ENCODE measurements at regions of chr17 and their contacts with region 1.

Region 1: DNA sequence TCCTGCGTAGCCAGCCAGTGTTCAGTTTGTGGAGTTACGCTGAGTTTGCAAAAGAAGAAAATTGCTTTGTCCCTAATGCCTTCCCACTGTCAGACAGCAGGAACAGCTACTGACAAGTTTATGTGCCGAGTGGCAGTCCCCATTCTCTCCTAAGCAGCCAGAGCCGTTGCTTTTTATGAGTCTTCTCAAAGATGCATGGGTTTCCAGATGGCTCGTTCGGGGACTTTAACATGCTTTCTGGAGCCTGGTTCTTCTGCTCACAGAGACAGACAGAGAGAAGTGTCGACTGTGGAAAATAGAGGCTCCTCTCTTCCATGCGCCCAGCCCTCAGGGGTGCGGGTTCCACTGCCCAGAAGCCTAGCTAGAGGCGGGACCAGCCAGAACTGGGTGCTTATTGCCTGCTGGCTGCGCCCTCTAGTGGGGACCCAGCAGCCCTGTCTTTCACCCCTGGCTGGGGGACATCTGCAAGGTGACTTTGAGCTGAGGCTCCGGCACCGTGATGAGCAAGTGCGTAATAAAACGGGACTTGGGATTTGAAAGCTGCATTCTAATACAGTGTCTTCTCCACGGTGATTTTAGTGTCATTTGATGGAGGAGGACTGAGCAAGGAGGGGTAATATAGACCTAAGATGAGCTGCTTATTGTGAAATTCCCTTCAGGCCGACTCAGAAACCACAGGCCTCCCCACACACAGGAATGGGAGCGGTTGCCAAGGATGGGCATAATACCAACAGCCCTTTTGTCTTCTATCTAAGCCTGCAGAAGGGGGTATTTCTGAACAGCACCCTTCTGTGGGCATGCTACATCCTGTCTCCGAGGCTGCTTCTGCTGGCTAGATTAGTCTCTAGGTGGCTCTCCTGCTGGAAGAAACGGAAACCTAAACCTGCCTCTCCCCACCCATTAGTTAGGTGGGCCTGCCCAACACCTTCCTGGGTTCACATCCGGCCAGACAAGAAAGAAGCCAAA is 73.1 kb downstream of the CCDC182 start:
- DNase-seq: peak; percentile 94
- H3K4me3 ChIP-seq: peak overlapping the region in 1 of 2 experiments; percentile 9; a peak in 1 of 4 replicates
- H3K27ac ChIP-seq: peak overlapping the region; percentile 5 to 100; a peak in 3 of 4 replicates
- H3K4me1 ChIP-seq: peaks cover 11 to 74% of the 10 kb centered on the region in 2 experiments; a peak in 3 of 4 replicates
- H3K27me3 ChIP-seq: no peaks in the 10 kb centered on the region
- CTCF ChIP-seq: peak; percentile 100
- EP300 ChIP-seq: peak; percentile 32 to 73; a peak in 3 of 4 replicates
- RAD21 ChIP-seq: peak; percentile 95

Region 2: GRCh38 chr17:57328093-57328882 is 343.7 kb before region 1 on chr17:
- CTCF ChIA-PET with region 1: no interaction called
- POLR2A ChIA-PET with region 1: no interaction called
- DNase-seq: no peak
- H3K4me3 ChIP-seq: no peak overlapping the region
- H3K27ac ChIP-seq: no peak overlapping the region; a peak in 1 of 4 replicates
- H3K4me1 ChIP-seq: peaks cover 9 to 14% of the 10 kb centered on the region in 2 experiments; a peak in 3 of 4 replicates
- H3K27me3 ChIP-seq: no peaks in the 10 kb centered on the region
- CTCF ChIP-seq: no peak
- EP300 ChIP-seq: no peak
- RAD21 ChIP-seq: no peak

Region 3: DNA sequence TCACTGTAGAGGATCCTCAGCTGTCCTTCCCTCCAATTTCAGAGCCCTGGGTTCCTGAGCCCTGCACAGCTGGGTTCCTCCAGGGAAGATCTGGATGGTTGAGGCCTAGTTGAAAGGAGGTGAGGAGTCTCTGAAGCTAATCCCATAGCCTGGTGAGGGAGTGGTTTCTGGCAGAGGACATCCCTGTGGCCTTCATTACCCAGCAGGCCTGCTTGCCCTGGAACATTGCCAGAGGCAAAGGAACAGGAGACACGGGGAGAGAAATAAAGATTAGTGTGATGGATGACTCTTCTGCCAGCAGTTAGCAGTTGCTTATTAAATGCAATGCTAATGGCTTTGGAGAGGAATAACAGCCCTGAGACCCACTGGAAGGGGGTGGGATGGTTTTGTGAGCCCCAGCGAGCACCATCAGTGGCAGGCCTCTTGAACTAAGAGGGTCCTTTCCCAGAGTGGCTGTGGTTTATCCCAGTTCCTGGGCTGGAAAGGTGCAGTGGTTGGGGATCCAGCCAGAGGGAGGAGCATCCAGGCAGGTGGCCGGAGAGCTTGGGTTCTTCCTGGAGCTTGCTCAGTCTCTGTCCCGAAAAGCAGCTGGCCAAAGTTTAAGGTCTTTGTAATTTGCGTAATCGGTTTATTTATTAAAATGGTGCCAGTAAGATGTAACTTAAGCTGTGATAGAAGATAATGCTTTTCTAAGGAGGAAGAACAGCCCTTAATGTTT is 136.5 kb before region 1 on chr17:
- CTCF ChIA-PET with region 1: interaction called, 11 read pairs
- POLR2A ChIA-PET with region 1: interaction called, 3 read pairs
- DNase-seq: peak; percentile 71
- H3K4me3 ChIP-seq: no peak overlapping the region
- H3K27ac ChIP-seq: peak overlapping the region in 1 of 2 experiments; percentile 100; a peak in 2 of 4 replicates
- H3K4me1 ChIP-seq: peaks cover 34 to 96% of the 10 kb centered on the region in 2 experiments
- H3K27me3 ChIP-seq: no peaks in the 10 kb centered on the region
- CTCF ChIP-seq: no peak
- EP300 ChIP-seq: peak in 1 of 2 experiments; percentile 88; a peak in 2 of 4 replicates
- RAD21 ChIP-seq: 0 out of 2 replicates have a peak, but pooled peaks have one; percentile 23

Region 4: DNA sequence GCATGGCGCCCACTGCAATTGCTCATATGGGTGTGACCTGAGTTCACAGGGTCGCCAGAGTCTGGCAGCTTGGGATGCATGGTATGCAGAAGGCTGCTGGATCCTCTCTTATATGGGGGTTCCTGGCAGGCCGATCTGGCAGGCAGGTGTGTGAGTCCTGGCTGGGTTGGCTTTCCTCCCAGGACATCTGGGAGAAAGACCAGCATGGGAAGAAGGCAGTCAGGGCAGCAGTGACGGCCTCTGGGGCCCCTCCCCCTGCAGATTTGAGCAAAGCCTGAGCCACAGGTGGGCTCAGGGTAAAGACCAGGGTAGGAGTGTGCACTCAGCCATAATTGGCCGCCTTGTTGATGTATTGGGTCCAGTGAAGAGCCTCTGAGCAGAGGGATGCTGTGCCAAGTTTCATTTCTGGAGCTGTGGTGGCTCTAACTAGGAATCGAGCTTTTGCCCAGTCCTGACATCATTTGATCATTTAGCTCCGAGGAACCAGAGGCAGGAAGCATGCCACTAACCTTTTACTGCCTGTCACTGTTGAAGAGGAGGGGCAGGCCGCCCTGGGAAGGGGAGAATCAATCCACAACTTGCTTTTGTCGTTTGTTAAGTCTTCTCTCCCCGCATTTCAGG is 101.1 kb before region 1 on chr17:
- CTCF ChIA-PET with region 1: interaction called, 10 read pairs
- POLR2A ChIA-PET with region 1: no interaction called
- DNase-seq: no peak
- H3K4me3 ChIP-seq: no peak overlapping the region
- H3K27ac ChIP-seq: peak overlapping the region in 1 of 2 experiments; percentile 100; a peak in 2 of 4 replicates
- H3K4me1 ChIP-seq: peaks cover 0 to 87% of the 10 kb centered on the region in 2 experiments; a peak in 2 of 4 replicates
- H3K27me3 ChIP-seq: no peaks in the 10 kb centered on the region
- CTCF ChIP-seq: no peak
- EP300 ChIP-seq: peak in 1 of 2 experiments; percentile 41; a peak in 1 of 4 replicates
- RAD21 ChIP-seq: peak; percentile 5; the same call in 1 of the 2 replicates

Region 5: DNA sequence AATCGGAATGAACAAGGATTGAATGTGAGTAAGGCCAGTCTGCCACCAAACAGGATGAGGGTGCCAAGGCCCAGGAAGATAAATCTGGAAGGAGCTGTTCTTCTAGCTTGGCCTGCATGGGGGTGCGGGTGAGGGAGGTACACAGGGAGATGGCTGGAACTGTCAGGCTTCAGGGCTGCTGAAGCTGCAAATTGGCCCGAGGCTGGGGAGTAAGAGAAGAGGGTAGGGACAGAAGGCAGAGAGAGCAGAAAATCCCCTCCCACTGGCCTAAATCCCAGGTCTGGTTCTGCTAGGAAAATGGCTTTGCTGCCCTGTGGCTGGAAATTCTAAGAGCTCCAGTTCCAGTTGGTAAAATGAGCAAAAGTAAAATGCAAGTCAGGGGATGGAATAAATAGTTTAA is 14.7 kb before region 1 on chr17:
- CTCF ChIA-PET with region 1: interaction called, 39 read pairs
- POLR2A ChIA-PET with region 1: interaction called, 5 read pairs
- DNase-seq: no peak
- H3K4me3 ChIP-seq: no peak overlapping the region
- H3K27ac ChIP-seq: peak overlapping the region in 1 of 2 experiments; percentile 44; a peak in 1 of 4 replicates
- H3K4me1 ChIP-seq: peaks cover 9 to 44% of the 10 kb centered on the region in 2 experiments; a peak in 3 of 4 replicates
- H3K27me3 ChIP-seq: no peaks in the 10 kb centered on the region
- CTCF ChIP-seq: no peak
- EP300 ChIP-seq: no peak
- RAD21 ChIP-seq: no peak

Region 6: GRCh38 chr17:57707851-57708291 is 35.9 kb after region 1 on chr17:
- CTCF ChIA-PET with region 1: interaction called, 17 read pairs
- POLR2A ChIA-PET with region 1: no interaction called
- DNase-seq: peak; percentile 70
- H3K4me3 ChIP-seq: no peak overlapping the region
- H3K27ac ChIP-seq: peak overlapping the region in 1 of 2 experiments; percentile 80; a peak in 2 of 4 replicates
- H3K4me1 ChIP-seq: peaks cover 0 to 29% of the 10 kb centered on the region in 2 experiments; a peak in 2 of 4 replicates
- H3K27me3 ChIP-seq: peaks cover 8% of the 10 kb centered on the region; the same call in 1 of the 2 replicates
- CTCF ChIP-seq: no peak
- EP300 ChIP-seq: no peak
- RAD21 ChIP-seq: no peak

Region 7: DNA sequence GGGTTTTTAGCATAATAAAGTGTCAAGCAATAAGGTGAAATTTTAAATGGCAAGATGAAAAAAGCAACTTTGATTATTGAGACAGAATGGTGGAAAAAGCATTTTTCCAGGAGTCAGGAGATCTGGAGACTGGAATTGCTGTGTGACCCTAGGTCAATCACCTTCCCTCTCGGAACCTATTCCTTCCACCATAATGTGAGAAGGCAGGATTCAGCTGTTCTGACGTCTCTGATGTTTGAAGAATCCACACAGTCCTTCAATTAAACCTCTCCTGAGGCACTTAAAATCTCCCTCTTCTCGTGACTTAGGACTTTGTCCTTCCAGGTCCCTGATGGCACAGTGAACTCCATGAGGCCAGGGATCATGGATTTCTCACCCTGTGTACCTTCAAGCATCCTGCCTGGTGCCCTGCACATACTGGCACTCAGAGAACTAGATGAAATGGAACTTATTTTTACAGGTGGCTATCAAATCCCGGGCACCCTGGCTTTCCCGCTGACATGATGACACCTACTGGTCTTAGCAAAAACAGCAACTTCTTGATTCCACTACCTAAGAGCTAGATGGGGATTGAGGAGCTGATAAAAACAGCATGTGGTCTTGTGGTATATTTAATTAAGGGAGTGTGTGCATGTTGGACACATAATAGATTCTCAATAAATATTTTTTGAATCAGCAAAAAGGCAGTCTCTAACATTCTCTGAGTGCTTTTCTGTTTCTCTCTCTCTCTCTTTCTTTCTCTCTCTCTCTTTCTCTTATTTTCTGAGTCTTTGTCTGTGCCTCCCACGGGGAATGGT is 75.5 kb after region 1 on chr17:
- CTCF ChIA-PET with region 1: interaction called, 45 read pairs
- POLR2A ChIA-PET with region 1: interaction called, 3 read pairs
- DNase-seq: peak; percentile 89
- H3K4me3 ChIP-seq: no peak overlapping the region
- H3K27ac ChIP-seq: peak overlapping the region in 1 of 2 experiments; percentile 85; a peak in 2 of 4 replicates
- H3K4me1 ChIP-seq: peaks cover 0 to 40% of the 10 kb centered on the region in 2 experiments; a peak in 2 of 4 replicates
- H3K27me3 ChIP-seq: peaks cover 18% of the 10 kb centered on the region; the same call in 1 of the 2 replicates
- CTCF ChIP-seq: peak; percentile 99
- EP300 ChIP-seq: peak in 1 of 2 experiments; percentile 64; a peak in 1 of 4 replicates
- RAD21 ChIP-seq: peak; percentile 100

Region 8: GRCh38 chr17:57861000-57861789 is 189.2 kb after region 1 on chr17:
- CTCF ChIA-PET with region 1: no interaction called
- POLR2A ChIA-PET with region 1: no interaction called
- DNase-seq: peak; percentile 70
- H3K4me3 ChIP-seq: peak overlapping the region in 1 of 2 experiments; percentile 28; a peak in 1 of 4 replicates
- H3K27ac ChIP-seq: no peak overlapping the region; a peak in 1 of 4 replicates
- H3K4me1 ChIP-seq: peaks cover 14 to 22% of the 10 kb centered on the region in 2 experiments; a peak in 3 of 4 replicates
- H3K27me3 ChIP-seq: no peaks in the 10 kb centered on the region
- CTCF ChIP-seq: no peak
- EP300 ChIP-seq: no peak
- RAD21 ChIP-seq: no peak

Region 9: GRCh38 chr17:57995076-57995956 is 323.4 kb after region 1 on chr17:
- CTCF ChIA-PET with region 1: no interaction called
- POLR2A ChIA-PET with region 1: no interaction called
- DNase-seq: peak; percentile 79
- H3K4me3 ChIP-seq: no peak overlapping the region
- H3K27ac ChIP-seq: peak overlapping the region; percentile 18 to 33; a peak in 3 of 4 replicates
- H3K4me1 ChIP-seq: peaks cover 0 to 13% of the 10 kb centered on the region in 2 experiments; a peak in 2 of 4 replicates
- H3K27me3 ChIP-seq: no peaks in the 10 kb centered on the region
- CTCF ChIP-seq: peak; percentile 87
- EP300 ChIP-seq: no peak
- RAD21 ChIP-seq: peak; percentile 97

Measured in SK-N-SH (cell line).